Astrocyte of the cerebellum (primary cell): ENCODE measurements at regions of chr1 and their contacts with region 1.

Region 1: GRCh38 chr1:162878000-162878596 is 17.1 kb upstream of the CCDC190 start:
- DNase-seq: peak; percentile 72
- H3K4me3 ChIP-seq: no peak overlapping the region
- CTCF ChIP-seq: peak; percentile 75

Region 2: DNA sequence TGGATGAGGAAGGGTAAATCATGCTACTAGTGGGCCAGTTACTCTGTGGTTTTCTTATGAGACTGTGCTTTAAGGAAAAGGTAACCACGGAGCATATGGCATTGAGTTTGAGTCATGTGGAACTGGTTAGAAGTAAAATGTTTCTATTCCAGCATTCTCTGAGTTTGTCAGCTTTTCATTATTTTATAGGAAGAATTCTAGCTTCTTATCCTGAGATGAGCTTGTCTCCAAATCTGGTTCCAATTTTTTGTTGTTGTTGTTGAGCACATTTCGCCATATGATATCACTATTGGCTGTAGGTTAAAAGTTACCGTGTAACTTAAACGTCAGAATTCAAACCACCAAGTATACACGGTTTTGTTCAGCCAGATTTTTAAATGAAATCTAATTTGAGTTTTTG is 1042.1 kb before region 1 on chr1:
- in situ Hi-C with region 1: no loop called
- DNase-seq: peak; percentile 71
- H3K4me3 ChIP-seq: no peak overlapping the region
- CTCF ChIP-seq: no peak

Region 3: GRCh38 chr1:162930976-162931560 is 53.0 kb after region 1 on chr1:
- in situ Hi-C with region 1: no loop called
- DNase-seq: no peak
- H3K4me3 ChIP-seq: no peak overlapping the region
- CTCF ChIP-seq: no peak

Region 4: DNA sequence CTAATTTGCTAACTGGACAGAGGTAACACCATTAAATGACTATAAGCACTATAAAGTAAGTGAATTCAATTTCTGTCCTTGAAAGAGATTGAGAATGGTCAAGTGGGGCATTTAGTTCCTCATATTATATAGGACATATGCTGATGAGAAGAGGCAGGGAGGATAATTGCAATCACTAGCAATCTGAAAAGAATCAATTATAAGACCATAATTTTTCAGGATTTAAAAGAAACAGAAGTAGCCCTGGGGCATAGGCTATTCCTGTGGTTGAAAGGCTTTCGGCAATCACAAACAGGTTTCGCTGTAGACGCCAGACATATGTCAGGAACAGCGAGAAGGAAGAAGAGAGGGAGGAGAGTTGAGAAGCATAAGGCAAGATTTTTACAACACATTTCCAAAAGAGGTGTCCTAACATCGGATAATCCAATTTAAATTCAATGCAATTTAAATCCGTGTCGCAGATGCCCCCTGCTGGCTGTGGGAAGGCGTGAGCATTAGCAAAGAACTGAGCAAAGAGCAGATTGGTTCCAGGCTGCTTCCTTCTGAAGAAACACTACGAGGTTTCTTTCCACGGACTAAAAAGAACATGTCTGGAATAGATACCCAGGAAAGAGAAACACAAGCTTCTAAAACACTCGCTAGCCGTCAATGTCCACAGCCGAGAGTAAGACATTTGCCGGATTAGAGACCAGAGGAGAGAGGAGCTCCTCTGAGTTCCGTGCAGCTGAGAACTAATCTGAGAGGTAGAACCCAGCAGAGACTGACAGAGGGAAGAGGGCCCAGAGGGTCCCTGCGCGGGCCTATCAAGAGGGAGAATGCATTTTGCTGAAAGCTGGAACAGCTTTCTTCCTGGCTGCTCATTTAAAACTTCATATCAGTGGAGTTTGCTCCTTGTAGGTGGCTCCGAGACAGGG is 296.7 kb after region 1 on chr1:
- in situ Hi-C with region 1: loop called (anchors 25 kb)
- DNase-seq: peak; percentile 44
- H3K4me3 ChIP-seq: no peak overlapping the region
- CTCF ChIP-seq: peak; percentile 88